Activated naive CD4-positive, alpha-beta T cell treated with anti-CD3 and anti-CD28 coated beads for 36 hours (primary cell): ENCODE measurements at regions of chr5 and their contacts with region 1.

Region 1: DNA sequence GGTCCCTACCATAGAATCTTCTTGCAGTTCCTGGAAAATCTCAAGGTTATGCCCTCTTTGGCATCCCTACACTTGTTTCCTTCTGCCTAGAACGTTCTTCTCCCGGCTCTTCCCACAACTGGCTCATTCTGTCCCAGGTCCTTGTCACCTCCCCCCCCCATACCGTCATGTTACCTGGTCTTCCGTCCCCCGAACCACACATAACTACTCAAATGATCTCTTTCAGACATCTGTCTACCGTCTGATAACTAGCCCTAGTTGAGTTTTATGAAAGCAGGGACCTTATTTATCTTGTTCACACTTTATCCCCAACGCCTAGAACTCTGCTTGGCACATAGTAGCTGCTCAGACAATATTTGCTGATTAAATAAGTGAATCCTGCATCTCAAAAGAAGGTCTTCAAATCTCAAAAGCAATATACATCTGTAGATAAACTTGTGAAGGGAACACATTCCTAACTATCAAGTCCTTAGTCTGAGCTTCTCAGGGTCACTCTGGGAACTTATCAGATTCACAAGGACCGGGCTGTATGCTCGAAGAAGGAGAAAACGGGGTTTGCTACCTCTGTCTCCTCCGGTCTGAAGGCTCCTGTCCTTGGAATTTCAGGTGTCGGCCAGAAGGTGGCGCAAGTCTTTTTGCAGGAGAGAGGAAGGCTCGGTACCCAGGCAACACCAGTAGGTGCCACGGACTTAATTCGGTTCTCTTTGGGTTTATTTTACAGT is 30.0 kb downstream of the LCP2 start:
- DNase-seq: peak; percentile 90
- H3K4me3 Mint-ChIP-seq: peak overlapping the region; percentile 57
- H3K27ac Mint-ChIP-seq: peak overlapping the region; percentile 86
- H3K4me1 Mint-ChIP-seq: peaks cover 88% of the 10 kb centered on the region
- H3K27me3 Mint-ChIP-seq: no peaks in the 10 kb centered on the region

Region 2: GRCh38 chr5:169805527-169805934 is 462.1 kb before region 1 on chr5:
- CTCF ChIA-PET with region 1: no interaction called
- intact Hi-C with region 1: loop called (anchors 10 kb)
- DNase-seq: peak; percentile 81
- H3K4me3 Mint-ChIP-seq: peak overlapping the region; percentile 1
- H3K27ac Mint-ChIP-seq: peak overlapping the region; percentile 92
- H3K4me1 Mint-ChIP-seq: peaks cover 38% of the 10 kb centered on the region
- H3K27me3 Mint-ChIP-seq: no peaks in the 10 kb centered on the region

Region 3: DNA sequence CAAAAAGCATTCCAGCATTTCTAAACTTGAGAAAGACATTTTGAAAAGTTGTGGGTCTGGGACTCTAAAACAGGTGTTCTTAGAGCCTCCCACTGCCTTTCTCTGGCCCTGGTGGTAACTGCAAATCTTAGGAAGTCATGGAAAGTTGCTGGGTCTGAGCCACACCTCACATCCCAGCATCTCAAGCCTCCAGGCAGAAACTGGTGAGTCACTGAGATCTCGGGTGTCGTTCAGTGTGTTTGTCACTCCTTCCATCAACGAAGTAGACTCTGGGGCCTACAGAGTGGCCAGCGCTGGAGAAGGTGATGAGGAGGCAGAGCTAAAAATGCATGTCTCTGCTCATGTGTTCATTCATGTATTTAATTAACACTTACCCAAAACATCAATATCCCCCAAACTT is 94.4 kb before region 1 on chr5:
- CTCF ChIA-PET with region 1: no interaction called
- intact Hi-C with region 1: no loop called
- DNase-seq: no peak
- H3K4me3 Mint-ChIP-seq: no peak overlapping the region
- H3K27ac Mint-ChIP-seq: no peak overlapping the region
- H3K4me1 Mint-ChIP-seq: no peaks in the 10 kb centered on the region
- H3K27me3 Mint-ChIP-seq: no peaks in the 10 kb centered on the region

Region 4: GRCh38 chr5:170247363-170247762 is 20.2 kb before region 1 on chr5:
- CTCF ChIA-PET with region 1: interaction called, 21 read pairs
- intact Hi-C with region 1: loop called (anchors 1 kb)
- DNase-seq: no peak
- H3K4me3 Mint-ChIP-seq: no peak overlapping the region
- H3K27ac Mint-ChIP-seq: peak overlapping the region; percentile 54
- H3K4me1 Mint-ChIP-seq: peaks cover 34% of the 10 kb centered on the region
- H3K27me3 Mint-ChIP-seq: no peaks in the 10 kb centered on the region

Region 5: DNA sequence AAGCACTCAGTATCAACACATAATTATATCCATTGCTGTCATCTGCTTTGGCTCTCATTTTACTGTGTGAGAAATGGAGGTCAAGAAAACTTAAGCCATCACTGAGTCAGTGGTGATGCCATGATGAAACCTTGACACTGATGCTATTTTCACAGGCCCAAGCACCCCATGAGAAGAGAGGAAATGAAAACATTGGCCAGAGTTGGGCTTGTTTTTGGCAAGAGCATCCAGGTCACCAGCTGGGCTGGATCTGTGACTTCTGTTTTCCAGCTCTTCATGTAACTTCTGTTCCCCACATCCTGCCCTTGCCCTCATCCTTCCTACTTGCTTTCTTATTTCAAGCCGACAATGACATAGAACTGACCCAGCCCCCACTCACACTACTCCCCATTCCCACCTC is 19.9 kb after region 1 on chr5:
- CTCF ChIA-PET with region 1: interaction called, 281 read pairs
- intact Hi-C with region 1: no loop called
- DNase-seq: no peak
- H3K4me3 Mint-ChIP-seq: no peak overlapping the region
- H3K27ac Mint-ChIP-seq: peak overlapping the region; percentile 85
- H3K4me1 Mint-ChIP-seq: peaks cover 97% of the 10 kb centered on the region
- H3K27me3 Mint-ChIP-seq: no peaks in the 10 kb centered on the region

Region 6: GRCh38 chr5:170312666-170313065 is 45.1 kb after region 1 on chr5:
- CTCF ChIA-PET with region 1: interaction called, 33 read pairs
- intact Hi-C with region 1: loop called (anchors 1 kb)
- DNase-seq: peak; percentile 90
- H3K4me3 Mint-ChIP-seq: peak overlapping the region; percentile 90
- H3K27ac Mint-ChIP-seq: peak overlapping the region; percentile 94
- H3K4me1 Mint-ChIP-seq: peaks cover 68% of the 10 kb centered on the region
- H3K27me3 Mint-ChIP-seq: no peaks in the 10 kb centered on the region

Region 7: DNA sequence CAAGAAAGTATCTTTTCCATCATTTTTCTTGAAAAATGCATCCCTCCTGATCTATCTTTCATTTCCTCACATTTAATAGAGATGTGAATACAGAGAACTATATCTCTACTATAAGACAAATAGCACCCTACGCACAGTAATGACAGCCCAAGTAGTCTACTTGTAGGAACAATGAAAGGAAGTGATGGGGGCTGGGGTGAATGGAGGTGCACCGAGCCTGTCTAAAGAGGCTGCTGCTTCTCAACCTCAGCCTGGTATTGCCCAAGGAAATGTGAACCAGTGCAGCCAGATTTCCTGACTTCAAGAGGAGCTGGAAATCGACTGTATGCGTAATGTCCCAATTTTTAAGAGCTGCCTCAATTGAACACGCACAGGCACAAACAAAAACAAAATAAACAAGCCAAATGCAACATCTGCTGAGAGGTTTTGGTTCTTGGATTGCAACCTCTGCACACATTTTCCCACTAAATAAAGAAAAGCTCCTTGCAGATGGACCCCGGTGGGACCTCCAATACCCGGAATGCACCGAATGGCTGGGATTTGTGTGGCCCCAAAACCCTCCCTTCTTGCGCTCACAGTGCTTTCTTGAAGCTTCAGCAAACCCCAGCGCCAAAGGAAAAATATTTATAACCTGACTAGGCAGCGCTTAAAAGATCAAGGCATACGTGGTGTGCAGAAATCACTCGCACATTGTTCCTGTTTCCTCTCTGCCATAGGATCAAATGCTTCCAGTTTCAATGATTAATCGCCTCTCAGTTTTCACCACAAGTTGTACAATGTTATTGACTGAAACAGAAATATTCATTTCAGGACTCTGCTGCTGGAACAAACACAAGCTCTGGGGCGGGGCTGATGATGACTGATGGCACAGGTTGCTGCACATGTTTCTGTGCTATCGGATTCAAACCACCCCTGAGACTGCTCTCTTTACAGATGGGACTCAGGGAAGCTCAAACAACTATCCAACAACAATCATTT is 304.6 kb after region 1 on chr5:
- CTCF ChIA-PET with region 1: no interaction called
- intact Hi-C with region 1: loop called (anchors 2 kb)
- DNase-seq: peak; percentile 94
- H3K4me3 Mint-ChIP-seq: no peak overlapping the region
- H3K27ac Mint-ChIP-seq: no peak overlapping the region
- H3K4me1 Mint-ChIP-seq: peaks cover 20% of the 10 kb centered on the region
- H3K27me3 Mint-ChIP-seq: peaks cover 63% of the 10 kb centered on the region